PC-3 (cell line): ENCODE measurements at regions of chr4 and their contacts with region 1.

Region 1: DNA sequence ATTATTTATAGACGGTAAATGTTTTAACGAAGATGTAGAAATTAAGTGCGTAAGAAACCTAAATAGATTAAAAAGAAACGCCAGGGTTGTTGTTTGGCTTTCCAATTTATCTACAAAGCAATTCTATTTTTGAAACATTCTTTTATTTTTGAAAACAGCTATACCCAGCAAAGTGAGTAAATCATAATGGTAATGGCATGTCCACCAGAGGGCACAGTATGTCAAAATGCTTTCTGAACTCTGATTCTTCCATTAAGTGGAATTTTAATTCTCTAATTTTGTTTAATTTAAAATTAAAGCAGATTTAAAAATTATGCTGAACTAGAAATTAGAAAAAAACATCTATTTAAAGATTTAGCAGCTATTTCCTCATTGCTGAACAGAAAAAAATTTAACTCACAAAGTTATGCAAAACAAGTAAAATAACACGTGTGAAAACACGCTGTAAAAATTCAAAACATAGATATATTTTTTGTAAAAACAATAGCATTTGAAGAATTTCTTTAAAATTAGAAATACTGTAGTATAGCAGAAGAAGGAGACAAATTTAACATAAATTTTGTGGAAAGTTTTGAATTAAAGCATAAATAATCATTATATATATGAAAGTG is 26.5 kb downstream of the RASSF6 start:
- DNase-seq: peak; percentile 76
- ATAC-seq: 0 out of 2 replicates have a peak, but pooled peaks have one; percentile 35
- H3K4me3 ChIP-seq: no peak overlapping the region
- H3K27ac ChIP-seq: no peak overlapping the region
- H3K4me1 ChIP-seq: peaks cover 15% of the 10 kb centered on the region
- H3K27me3 ChIP-seq: no peaks in the 10 kb centered on the region
- CTCF ChIP-seq: peak; percentile 92

Region 2: DNA sequence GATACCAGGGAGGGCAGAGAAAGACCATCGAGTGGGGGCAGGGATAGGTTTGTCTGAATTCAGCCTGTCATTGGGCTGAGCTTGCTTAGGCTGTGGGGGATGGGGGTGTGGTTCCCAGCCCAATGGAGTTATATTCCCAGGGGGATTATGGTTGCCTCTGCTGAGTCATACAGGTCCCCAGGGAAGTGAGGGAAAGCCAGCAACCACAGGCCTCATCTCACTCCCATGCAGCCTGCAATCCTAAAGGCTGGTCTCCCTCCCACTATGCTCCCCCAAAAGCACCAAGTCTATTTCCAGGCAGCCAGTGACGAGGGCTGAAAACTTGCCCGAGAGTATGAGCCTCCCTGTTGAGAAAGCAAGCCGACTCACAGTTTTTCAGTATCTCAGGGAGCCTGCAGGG is 72.9 kb before region 1 on chr4:
- CTCF ChIA-PET with region 1: no interaction called
- POLR2A ChIA-PET with region 1: no interaction called
- intact Hi-C with region 1: loop called (anchors 5 kb)
- DNase-seq: peak; percentile 48
- ATAC-seq: no peak; the same call in 1 of the 2 replicates
- H3K4me3 ChIP-seq: no peak overlapping the region
- H3K27ac ChIP-seq: no peak overlapping the region; the same call in 1 of the 2 replicates
- H3K4me1 ChIP-seq: peaks cover 12% of the 10 kb centered on the region
- H3K27me3 ChIP-seq: no peaks in the 10 kb centered on the region
- CTCF ChIP-seq: no peak

Region 3: GRCh38 chr4:73606465-73606974 is 12.8 kb after region 1 on chr4:
- CTCF ChIA-PET with region 1: interaction called, 5 read pairs
- POLR2A ChIA-PET with region 1: no interaction called
- intact Hi-C with region 1: loop called (anchors 2 kb)
- DNase-seq: peak; percentile 64
- ATAC-seq: peak; percentile 20; the same call in 1 of the 2 replicates
- H3K4me3 ChIP-seq: no peak overlapping the region
- H3K27ac ChIP-seq: peak overlapping the region; percentile 51
- H3K4me1 ChIP-seq: peaks cover 55% of the 10 kb centered on the region
- H3K27me3 ChIP-seq: no peaks in the 10 kb centered on the region
- CTCF ChIP-seq: no peak

Region 4: GRCh38 chr4:73676861-73677323 is 83.2 kb after region 1 on chr4:
- CTCF ChIA-PET with region 1: no interaction called
- POLR2A ChIA-PET with region 1: no interaction called
- intact Hi-C with region 1: no loop called
- DNase-seq: peak; percentile 100
- ATAC-seq: peak; percentile 81
- H3K4me3 ChIP-seq: no peak overlapping the region
- H3K27ac ChIP-seq: peak overlapping the region; percentile 96
- H3K4me1 ChIP-seq: peaks cover 82% of the 10 kb centered on the region
- H3K27me3 ChIP-seq: no peaks in the 10 kb centered on the region
- CTCF ChIP-seq: no peak

Region 5: GRCh38 chr4:73922766-73923630 is 329.3 kb after region 1 on chr4:
- CTCF ChIA-PET with region 1: no interaction called
- POLR2A ChIA-PET with region 1: no interaction called
- intact Hi-C with region 1: loop called (anchors 10 kb)
- DNase-seq: peak; percentile 83
- ATAC-seq: peak; percentile 70
- H3K4me3 ChIP-seq: no peak overlapping the region
- H3K27ac ChIP-seq: peak overlapping the region; percentile 59
- H3K4me1 ChIP-seq: peaks cover 26% of the 10 kb centered on the region
- H3K27me3 ChIP-seq: no peaks in the 10 kb centered on the region
- CTCF ChIP-seq: peak; percentile 91